GM12878 (cell line): ENCODE measurements at regions of chr3 and their contacts with region 1.

Region 1: DNA sequence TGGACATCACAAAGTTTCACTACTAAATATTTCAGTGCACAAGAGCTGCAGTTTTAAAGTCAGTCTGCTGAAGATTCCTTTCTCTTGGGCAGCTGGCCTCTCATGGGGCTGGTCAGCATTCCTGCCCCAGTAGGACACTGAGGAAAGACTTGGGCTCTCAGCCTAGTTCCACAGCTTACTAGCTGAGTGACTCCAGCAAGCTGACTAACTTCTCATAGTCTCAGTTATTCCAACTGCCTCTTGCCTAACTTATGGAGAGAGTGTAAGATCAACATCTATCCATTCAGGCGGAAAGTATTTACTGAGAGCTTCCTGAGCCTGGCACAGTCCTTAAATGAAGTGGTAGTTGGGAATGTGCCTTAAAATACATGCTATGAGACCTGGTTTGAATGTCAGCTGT is 27.0 kb downstream of the TM4SF4 start:
- DNase-seq: no peak
- ATAC-seq: no peak
- H3K4me3 ChIP-seq: no peak overlapping the region
- H3K27ac ChIP-seq: no peak overlapping the region
- H3K4me1 ChIP-seq: no peaks in the 10 kb centered on the region
- H3K27me3 ChIP-seq: no peaks in the 10 kb centered on the region
- CTCF ChIP-seq: no peak
- EP300 ChIP-seq: no peak
- POLR2A ChIP-seq: no peak
- RAD21 ChIP-seq: no peak

Region 2: DNA sequence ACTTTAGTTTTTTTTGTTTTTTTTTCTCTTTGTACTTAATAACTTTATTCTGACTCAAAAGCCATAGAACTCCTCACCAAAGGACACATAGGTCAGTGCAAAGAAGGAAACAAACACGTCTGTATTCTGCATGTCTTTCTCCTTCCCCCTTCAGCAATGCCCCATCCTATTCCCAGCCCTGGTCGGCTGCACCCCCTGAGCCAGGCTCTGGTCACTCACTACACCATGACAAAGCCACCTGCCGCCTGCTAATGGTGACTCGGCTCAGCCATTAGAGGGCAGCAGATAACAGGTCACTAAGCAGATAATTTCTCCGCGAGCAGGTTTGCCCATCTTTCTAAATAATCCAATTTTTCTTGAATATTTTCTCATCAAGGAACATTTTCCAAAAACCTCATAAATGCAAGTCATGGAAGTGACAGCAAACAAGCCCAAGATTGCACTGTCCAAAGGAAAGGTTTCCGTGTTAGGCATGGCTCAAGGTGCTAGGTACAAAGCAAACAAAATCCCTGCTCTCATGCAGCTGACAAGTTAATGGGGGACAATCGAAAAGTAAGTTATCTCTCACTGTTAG is 10.8 kb after region 1 on chr3:
- CTCF ChIA-PET with region 1: interaction called, 10 read pairs
- POLR2A ChIA-PET with region 1: no interaction called
- RAD21 ChIA-PET with region 1: no interaction called
- SMC1A ChIA-PET with region 1: interaction called, 7 read pairs
- in situ Hi-C with region 1: no loop called
- intact Hi-C with region 1: no loop called
- DNase-seq: no peak
- ATAC-seq: peak; percentile 92
- H3K4me3 ChIP-seq: no peak overlapping the region
- H3K27ac ChIP-seq: no peak overlapping the region
- H3K4me1 ChIP-seq: no peaks in the 10 kb centered on the region; the same call in 1 of the 2 replicates
- H3K27me3 ChIP-seq: no peaks in the 10 kb centered on the region
- CTCF ChIP-seq: peak; percentile 81 to 85 (median 84); a peak in 5 of 6 replicates
- EP300 ChIP-seq: no peak
- POLR2A ChIP-seq: no peak
- RAD21 ChIP-seq: peak; percentile 93